ENCODE measurements at regions of chr17 and their contacts with region 1.

Region 1: DNA sequence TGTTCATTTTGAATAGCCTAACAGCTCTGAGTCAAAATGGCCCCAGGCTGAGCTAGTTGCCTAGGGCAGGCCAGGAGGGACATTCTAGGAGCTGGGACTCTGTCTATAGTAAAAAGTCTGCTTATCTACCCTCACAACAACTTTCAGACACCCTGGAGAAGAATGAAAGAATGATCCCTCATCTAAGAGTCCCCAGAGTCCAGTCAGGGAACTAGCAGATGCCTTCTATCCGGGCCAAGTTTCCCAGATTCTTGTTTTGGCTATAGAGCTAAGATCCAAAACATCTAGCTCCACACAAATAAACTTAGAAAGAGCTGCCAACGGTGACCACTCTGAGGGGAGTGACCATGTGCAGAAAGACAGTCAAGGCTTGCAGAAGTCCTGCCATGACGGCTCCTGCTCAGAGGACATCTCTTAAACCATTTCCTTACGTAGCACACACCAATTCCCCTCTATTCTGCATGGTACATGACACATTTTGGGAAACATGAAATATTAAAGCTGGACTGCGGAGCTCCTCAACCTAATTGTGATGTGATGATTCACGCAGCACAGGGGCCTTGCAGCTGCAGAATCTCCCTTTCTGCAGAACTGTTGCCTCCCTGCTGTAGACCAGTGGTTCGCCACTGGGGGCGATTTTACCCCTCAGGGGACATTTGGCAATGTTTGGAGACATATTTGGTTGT is 24.2 kb downstream of the FAM20A start:
- DNase-seq: no peak
- ATAC-seq: peak; percentile 22
- H3K4me3 ChIP-seq: no peak overlapping the region
- H3K27ac ChIP-seq: no peak overlapping the region
- H3K4me1 ChIP-seq: peaks cover 30% of the 10 kb centered on the region
- H3K27me3 ChIP-seq: no peaks in the 10 kb centered on the region
- CTCF ChIP-seq: no peak
- EP300 ChIP-seq: no peak
- POLR2A ChIP-seq: no peak
- RAD21 ChIP-seq: no peak

Region 2: GRCh38 chr17:68613739-68614298 is 36.9 kb after region 1 on chr17:
- CTCF ChIA-PET with region 1: no interaction called
- POLR2A ChIA-PET with region 1: interaction called, 14 read pairs
- in situ Hi-C with region 1: no loop called
- intact Hi-C with region 1: no loop called
- DNase-seq: peak; percentile 86
- ATAC-seq: peak; percentile 92
- H3K4me3 ChIP-seq: peak overlapping the region in 2 of 3 experiments; percentile 23 to 47; a peak in 2 of 6 replicates
- H3K27ac ChIP-seq: peak overlapping the region; percentile 37
- H3K4me1 ChIP-seq: peaks cover 35% of the 10 kb centered on the region
- H3K27me3 ChIP-seq: no peaks in the 10 kb centered on the region; a peak in 1 of 5 replicates
- CTCF ChIP-seq: peak; percentile 94
- EP300 ChIP-seq: no peak; a peak in 1 of 4 replicates
- POLR2A ChIP-seq: no peak
- RAD21 ChIP-seq: peak; percentile 85

Region 3: DNA sequence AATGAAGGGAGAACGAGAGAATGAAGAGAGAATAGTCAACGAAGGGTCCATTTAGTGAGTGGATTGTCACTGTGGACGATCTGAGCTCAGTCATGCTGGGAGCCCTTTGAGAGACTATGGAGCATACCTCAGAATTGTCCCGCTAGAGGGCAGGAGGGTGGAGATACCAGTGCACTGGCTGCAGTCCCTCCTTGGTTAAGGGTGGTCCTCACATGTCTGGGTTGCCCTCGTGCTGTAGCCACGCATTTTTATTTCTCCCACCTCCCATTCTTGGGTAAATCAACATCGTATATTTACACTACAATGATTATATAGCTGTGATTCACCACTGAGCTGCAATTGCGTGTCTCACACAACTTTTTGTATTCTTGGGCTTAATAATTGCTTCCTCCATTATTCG is 57.4 kb after region 1 on chr17:
- CTCF ChIA-PET with region 1: no interaction called
- POLR2A ChIA-PET with region 1: no interaction called
- in situ Hi-C with region 1: loop called (anchors 10 kb)
- intact Hi-C with region 1: no loop called
- DNase-seq: peak; percentile 18
- ATAC-seq: peak; percentile 86
- H3K4me3 ChIP-seq: no peak overlapping the region
- H3K27ac ChIP-seq: no peak overlapping the region
- H3K4me1 ChIP-seq: no peaks in the 10 kb centered on the region
- H3K27me3 ChIP-seq: no peaks in the 10 kb centered on the region; a peak in 3 of 5 replicates
- CTCF ChIP-seq: peak; percentile 60
- EP300 ChIP-seq: no peak
- POLR2A ChIP-seq: no peak
- RAD21 ChIP-seq: no peak

Measured in HepG2 (cell line).